Activated CD4-positive, alpha-beta T cell treated with anti-CD3 and anti-CD28 coated beads for 36 hours (primary cell): ENCODE measurements at regions of chr3 and their contacts with region 1.

Region 1: DNA sequence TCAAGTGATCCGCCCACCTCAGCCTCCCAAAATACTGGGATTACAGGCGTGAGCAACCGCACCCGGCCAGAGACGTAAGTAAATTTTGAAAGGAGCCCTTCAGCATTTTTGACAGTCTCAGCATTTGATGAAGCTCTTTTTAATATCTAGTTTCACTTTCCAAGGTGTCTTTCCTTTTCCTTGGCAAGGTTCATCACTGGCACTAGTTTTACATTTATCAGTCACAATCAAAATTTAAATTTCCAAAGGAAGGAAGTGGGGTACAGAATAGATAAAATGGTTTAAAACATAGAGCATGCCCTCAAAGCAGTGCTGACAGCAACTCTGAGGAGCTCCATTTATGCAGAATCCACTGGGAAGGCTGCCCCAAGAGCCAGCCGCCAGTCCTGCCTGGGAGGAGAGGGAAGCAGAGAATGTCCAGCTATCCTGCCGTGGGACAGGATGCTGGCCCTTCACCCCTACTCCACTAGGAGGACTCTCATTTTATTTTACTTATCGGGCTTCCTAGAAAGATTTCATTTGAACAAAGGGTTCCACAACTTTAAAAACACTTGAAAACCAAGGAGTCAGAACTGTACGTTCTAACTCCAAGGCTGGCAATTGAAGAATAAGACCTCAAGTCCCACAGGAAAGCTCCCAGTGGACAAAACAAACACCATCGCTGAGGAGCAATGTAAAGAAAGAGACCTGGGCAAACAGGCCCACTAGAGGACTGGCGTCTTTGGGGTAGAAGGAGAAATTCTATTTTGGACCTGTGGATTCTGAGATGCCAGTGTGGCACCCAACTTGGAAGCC is 9.9 kb downstream of the SFMBT1 start:
- DNase-seq: no peak
- ATAC-seq: no peak
- H3K4me3 Mint-ChIP-seq: no peak overlapping the region
- H3K27ac Mint-ChIP-seq: peak overlapping the region; percentile 12
- H3K4me1 Mint-ChIP-seq: peaks cover 60% of the 10 kb centered on the region
- H3K27me3 Mint-ChIP-seq: no peaks in the 10 kb centered on the region

Region 2: GRCh38 chr3:52636673-52637072 is 399.3 kb before region 1 on chr3:
- CTCF ChIA-PET with region 1: no interaction called
- POLR2A ChIA-PET with region 1: no interaction called
- intact Hi-C with region 1: no loop called
- DNase-seq: no peak
- ATAC-seq: no peak
- H3K4me3 Mint-ChIP-seq: no peak overlapping the region
- H3K27ac Mint-ChIP-seq: no peak overlapping the region
- H3K4me1 Mint-ChIP-seq: no peaks in the 10 kb centered on the region
- H3K27me3 Mint-ChIP-seq: no peaks in the 10 kb centered on the region

Region 3: GRCh38 chr3:53023068-53023823 is 12.8 kb before region 1 on chr3:
- CTCF ChIA-PET with region 1: interaction called, 11 read pairs
- POLR2A ChIA-PET with region 1: interaction called, 3 read pairs
- intact Hi-C with region 1: loop called in 1 of 2 experiments (anchors 1 kb)
- DNase-seq: no peak
- ATAC-seq: peak; percentile 73
- H3K4me3 Mint-ChIP-seq: no peak overlapping the region
- H3K27ac Mint-ChIP-seq: peak overlapping the region; percentile 45
- H3K4me1 Mint-ChIP-seq: peaks cover 65% of the 10 kb centered on the region
- H3K27me3 Mint-ChIP-seq: no peaks in the 10 kb centered on the region

Region 4: GRCh38 chr3:53089511-53089910 is 53.5 kb after region 1 on chr3:
- CTCF ChIA-PET with region 1: no interaction called
- POLR2A ChIA-PET with region 1: no interaction called
- intact Hi-C with region 1: no loop called
- DNase-seq: no peak
- ATAC-seq: no peak
- H3K4me3 Mint-ChIP-seq: no peak overlapping the region
- H3K27ac Mint-ChIP-seq: no peak overlapping the region
- H3K4me1 Mint-ChIP-seq: peaks cover 1% of the 10 kb centered on the region
- H3K27me3 Mint-ChIP-seq: no peaks in the 10 kb centered on the region